ENCODE measurements at regions of chr3 and their contacts with region 1.

Region 1: DNA sequence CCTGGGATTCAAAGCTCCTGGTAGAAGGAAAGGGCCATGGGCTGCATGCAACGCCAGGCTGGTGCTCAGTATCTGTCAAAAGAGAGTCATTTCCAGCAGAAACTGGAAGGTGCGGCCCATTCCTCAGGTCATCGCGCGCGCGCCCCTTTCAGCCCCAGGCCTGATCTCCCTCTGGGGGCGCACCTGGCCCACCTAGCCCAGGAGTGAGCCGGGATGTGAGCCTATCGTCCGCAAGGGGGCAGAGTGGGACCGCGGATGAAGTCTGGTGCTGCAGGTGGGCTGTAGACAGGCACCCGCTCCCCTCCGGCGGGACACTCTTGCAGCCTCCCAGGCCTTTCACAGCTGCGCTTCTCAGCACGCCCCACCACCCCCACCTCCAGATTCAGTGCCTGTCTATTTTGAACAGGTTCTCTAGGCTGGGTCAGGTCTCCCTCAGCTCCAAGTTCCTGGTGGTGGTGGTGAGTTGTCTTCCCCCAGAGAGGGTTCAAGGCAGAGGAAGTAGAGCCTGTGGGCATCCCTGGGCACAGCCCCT is 5.8 kb upstream of the RPL29 start:
- DNase-seq: no peak
- H3K4me3 ChIP-seq: no peak overlapping the region
- H3K27me3 ChIP-seq: no peaks in the 10 kb centered on the region
- CTCF ChIP-seq: peak; percentile 96

Region 2: GRCh38 chr3:52014613-52015012 is 13.1 kb after region 1 on chr3:
- CTCF ChIA-PET with region 1: interaction called, 21 read pairs
- POLR2A ChIA-PET with region 1: no interaction called
- DNase-seq: no peak
- H3K4me3 ChIP-seq: no peak overlapping the region
- H3K27me3 ChIP-seq: no peaks in the 10 kb centered on the region
- CTCF ChIP-seq: peak; percentile 56

Region 3: GRCh38 chr3:52046186-52046913 is 44.8 kb after region 1 on chr3:
- CTCF ChIA-PET with region 1: interaction called, 179 read pairs
- POLR2A ChIA-PET with region 1: no interaction called
- DNase-seq: peak; percentile 95
- H3K4me3 ChIP-seq: no peak overlapping the region
- H3K27me3 ChIP-seq: no peaks in the 10 kb centered on the region
- CTCF ChIP-seq: no peak

Region 4: GRCh38 chr3:52093756-52094545 is 92.4 kb after region 1 on chr3:
- CTCF ChIA-PET with region 1: interaction called, 11 read pairs
- POLR2A ChIA-PET with region 1: no interaction called
- DNase-seq: no peak
- H3K4me3 ChIP-seq: no peak overlapping the region
- H3K27me3 ChIP-seq: no peaks in the 10 kb centered on the region
- CTCF ChIP-seq: no peak

Region 5: GRCh38 chr3:52108302-52109232 is 107.1 kb after region 1 on chr3:
- CTCF ChIA-PET with region 1: interaction called, 54 read pairs
- POLR2A ChIA-PET with region 1: no interaction called
- DNase-seq: no peak
- H3K4me3 ChIP-seq: no peak overlapping the region
- H3K27me3 ChIP-seq: no peaks in the 10 kb centered on the region
- CTCF ChIP-seq: peak; percentile 52

Region 6: GRCh38 chr3:52144034-52144795 is 142.7 kb after region 1 on chr3:
- CTCF ChIA-PET with region 1: interaction called, 356 read pairs
- POLR2A ChIA-PET with region 1: no interaction called
- DNase-seq: no peak
- H3K4me3 ChIP-seq: no peak overlapping the region
- H3K27me3 ChIP-seq: no peaks in the 10 kb centered on the region
- CTCF ChIP-seq: peak; percentile 95

Region 7: DNA sequence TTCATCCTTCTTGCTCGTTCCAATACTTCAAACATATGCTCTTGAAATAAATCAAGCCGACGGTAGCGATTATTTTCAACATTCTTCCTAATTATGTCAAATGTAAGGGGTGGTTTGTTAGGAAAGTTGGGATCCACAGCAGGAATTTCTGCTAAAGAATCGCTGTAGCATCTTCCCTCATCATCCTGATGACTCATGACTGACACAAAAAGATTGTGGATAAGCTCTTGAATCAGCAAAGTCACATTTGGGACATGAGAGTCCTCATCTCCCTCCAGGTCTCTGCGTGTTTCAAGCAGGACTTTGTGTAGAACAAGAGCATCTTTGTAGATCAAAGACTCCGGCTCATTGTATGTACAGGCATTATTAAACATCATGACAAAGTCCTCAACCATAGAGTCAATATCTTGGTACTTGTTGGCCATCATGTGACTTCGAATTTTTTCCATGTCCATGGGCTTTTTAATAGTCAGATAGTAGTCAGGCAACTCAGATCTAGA is 607.9 kb after region 1 on chr3:
- CTCF ChIA-PET with region 1: no interaction called
- POLR2A ChIA-PET with region 1: no interaction called
- DNase-seq: no peak
- H3K4me3 ChIP-seq: no peak overlapping the region
- H3K27me3 ChIP-seq: no peaks in the 10 kb centered on the region
- CTCF ChIP-seq: no peak

Measured in BJ (cell line).